Activated T-helper 1 cell treated with anti-CD3 and anti-CD28 coated beads, Interleukin-12 subunit alpha, Interleukin-12 subunit beta, Interleukin-2, Interleukin-4 antibody, amounts not matched to agents 30 ng/mL and 10 ng/mL and 1 ng/mL, durations not matched to agents 14 hours and 24 hours and 36 hours (primary cell): ENCODE measurements at regions of chr11 and their contacts with region 1.

Region 1: GRCh38 chr11:76588455-76589325 is 81.9 kb downstream of the LRRC32 start:
- DNase-seq: peak; percentile 43
- H3K4me3 Mint-ChIP-seq: peak overlapping the region; percentile 5
- H3K27ac Mint-ChIP-seq: peak overlapping the region; percentile 83
- H3K4me1 Mint-ChIP-seq: peaks cover 73% of the 10 kb centered on the region
- H3K27me3 Mint-ChIP-seq: peaks cover 2% of the 10 kb centered on the region

Region 2: GRCh38 chr11:76013526-76013925 is 575.2 kb before region 1 on chr11:
- intact Hi-C with region 1: no loop called
- DNase-seq: no peak
- H3K4me3 Mint-ChIP-seq: no peak overlapping the region
- H3K27ac Mint-ChIP-seq: no peak overlapping the region
- H3K4me1 Mint-ChIP-seq: no peaks in the 10 kb centered on the region
- H3K27me3 Mint-ChIP-seq: no peaks in the 10 kb centered on the region

Region 3: GRCh38 chr11:76339221-76339620 is 249.5 kb before region 1 on chr11:
- intact Hi-C with region 1: no loop called
- DNase-seq: no peak
- H3K4me3 Mint-ChIP-seq: no peak overlapping the region
- H3K27ac Mint-ChIP-seq: peak overlapping the region; percentile 8
- H3K4me1 Mint-ChIP-seq: peaks cover 23% of the 10 kb centered on the region
- H3K27me3 Mint-ChIP-seq: no peaks in the 10 kb centered on the region

Region 4: GRCh38 chr11:76568139-76568538 is 20.6 kb before region 1 on chr11:
- intact Hi-C with region 1: loop called (anchors 2 kb)
- DNase-seq: no peak
- H3K4me3 Mint-ChIP-seq: no peak overlapping the region
- H3K27ac Mint-ChIP-seq: peak overlapping the region; percentile 70
- H3K4me1 Mint-ChIP-seq: peaks cover 7% of the 10 kb centered on the region
- H3K27me3 Mint-ChIP-seq: peaks cover 9% of the 10 kb centered on the region

Region 5: DNA sequence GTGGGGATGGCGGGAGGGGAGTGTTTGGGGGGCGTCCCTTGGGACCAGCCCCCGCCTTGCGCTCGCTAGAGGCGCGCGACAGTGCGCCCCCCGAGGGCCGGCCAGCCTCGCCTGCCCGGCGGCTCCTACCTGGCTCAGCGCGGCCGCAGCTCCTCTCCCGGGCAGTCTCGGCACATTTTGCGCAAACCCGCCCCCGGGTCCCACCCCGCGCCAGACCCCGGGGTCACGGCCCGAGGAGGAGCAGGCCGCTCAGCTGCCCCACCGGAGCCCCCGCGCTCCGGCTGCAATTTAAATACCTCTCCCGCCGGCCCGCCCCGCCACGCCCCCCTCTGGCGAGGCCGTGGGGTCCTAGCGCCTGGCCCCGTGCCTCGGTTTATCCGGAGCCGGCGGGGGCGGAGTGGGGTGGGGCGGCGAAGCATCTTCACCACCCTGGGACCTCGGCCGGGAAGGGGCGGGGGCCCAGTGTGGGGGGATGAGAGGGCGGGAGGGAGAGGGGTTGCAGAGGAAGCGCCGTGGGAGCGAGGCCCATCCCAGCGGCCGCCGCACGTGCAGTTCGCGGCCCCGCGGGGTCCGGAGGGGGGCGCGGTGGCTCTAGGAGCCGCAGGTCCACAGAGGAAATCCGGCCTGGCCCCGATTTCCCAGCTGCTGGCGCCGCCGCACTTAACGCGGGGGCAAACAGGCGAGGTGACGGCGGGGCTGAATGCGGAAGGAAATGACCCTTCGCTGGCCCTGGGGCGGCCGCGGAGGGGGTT is 82.0 kb after region 1 on chr11 and contains the start of gene LRRC32:
- intact Hi-C with region 1: loop called (anchors 2 kb)
- DNase-seq: no peak
- H3K4me3 Mint-ChIP-seq: peak within 1 kb of the TSS; percentile 77
- H3K27ac Mint-ChIP-seq: peak within 1 kb of the TSS; percentile 15
- H3K4me1 Mint-ChIP-seq: peaks cover 31% of the 10 kb centered on the region
- H3K27me3 Mint-ChIP-seq: peaks cover 12% of the 10 kb centered on the region
- total RNA-seq, gene LRRC32: 5.5 and 5.7 TPM in 2 replicates